H1 (cell line): ENCODE measurements at regions of chr14 and their contacts with region 1.

Region 1: DNA sequence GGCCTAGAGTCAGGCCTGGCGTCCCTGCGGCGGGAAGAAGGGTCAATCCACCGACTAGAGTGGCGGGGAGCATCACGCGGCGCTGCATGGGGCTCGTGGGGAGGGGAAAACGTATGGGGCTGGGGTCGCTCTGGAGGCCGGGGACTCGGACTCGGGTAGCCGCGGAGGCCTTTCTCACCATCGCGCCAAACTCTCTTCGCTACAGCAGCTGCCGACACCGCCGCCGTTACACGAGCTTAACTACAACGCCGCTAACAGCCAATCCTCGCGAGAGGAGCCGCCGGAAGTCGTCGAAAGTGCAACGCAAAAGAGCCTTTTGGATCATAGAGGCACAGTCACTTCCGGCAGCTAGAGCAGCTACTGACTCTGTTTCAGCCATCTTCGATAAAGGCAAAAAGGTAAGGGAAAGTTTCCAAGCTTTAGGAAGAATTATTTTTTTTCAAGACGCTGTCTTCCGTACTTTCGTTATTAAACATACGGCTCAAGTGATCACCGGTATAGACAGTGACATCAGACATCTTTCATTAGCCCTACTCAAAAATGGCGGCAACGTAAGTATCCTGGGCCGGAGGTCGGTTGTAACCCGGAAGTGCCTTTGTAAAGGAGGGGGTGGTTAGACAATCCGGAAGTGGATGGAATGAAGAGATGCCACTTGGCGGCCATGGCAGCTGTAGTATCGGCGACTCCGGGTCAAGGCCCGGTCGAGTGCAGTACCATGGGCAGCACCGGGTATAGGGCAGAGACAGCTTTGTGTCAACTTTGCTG is at the starts of genes ERH and SLC39A9:
- DNase-seq: peak; percentile 85 to 89
- H3K4me3 ChIP-seq: peak within 1 kb of the TSS; percentile 83 to 98 (median 92)
- H3K27ac ChIP-seq: peak within 1 kb of the TSS; percentile 93
- H3K4me1 ChIP-seq: peaks cover 0 to 2% (median under 1%) of the 10 kb centered on the region in 4 experiments; a peak in 2 of 7 replicates
- H3K27me3 ChIP-seq: no peaks in the 10 kb centered on the region
- CTCF ChIP-seq: no peak
- EP300 ChIP-seq: 0 out of 3 replicates have a peak, but pooled peaks of 1 of the 2 experiments have one; percentile 4
- POLR2A ChIP-seq: peak; percentile 81 to 98
- RAD21 ChIP-seq: no peak
- total RNA-seq, gene ERH: 447 and 454 TPM in 2 replicates
- total RNA-seq, gene SLC39A9: 43.8 and 44.2 TPM in 2 replicates

Region 2: DNA sequence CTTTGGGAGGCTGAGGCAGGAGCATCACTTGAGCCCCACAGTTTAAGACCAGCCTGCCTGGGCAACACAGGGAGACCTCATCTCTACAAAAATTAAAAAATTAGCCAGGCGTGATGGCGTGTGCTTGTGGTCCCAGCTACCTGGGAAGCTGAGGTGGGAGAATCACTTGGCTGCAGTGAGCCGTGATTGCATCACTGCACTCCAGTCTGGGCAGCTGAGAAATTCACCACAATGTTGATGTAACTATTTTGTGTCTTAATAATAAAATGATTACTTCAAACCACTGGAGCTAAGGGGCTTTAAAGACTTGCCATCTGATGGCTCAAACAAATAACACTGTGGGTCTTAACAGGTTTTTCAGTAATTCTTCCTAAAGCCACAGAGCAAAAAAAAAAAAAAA is 10.9 kb before region 1 on chr14:
- CTCF ChIA-PET with region 1: interaction called, 3 read pairs
- POLR2A ChIA-PET with region 1: interaction called, 131 read pairs
- DNase-seq: no peak
- H3K4me3 ChIP-seq: no peak overlapping the region
- H3K27ac ChIP-seq: no peak overlapping the region
- H3K4me1 ChIP-seq: 0 out of 7 replicates have a peak, but pooled peaks cover 0 to under 1% (median 0%) of the 10 kb centered on the region in 4 experiments
- H3K27me3 ChIP-seq: no peaks in the 10 kb centered on the region
- CTCF ChIP-seq: no peak
- EP300 ChIP-seq: no peak
- POLR2A ChIP-seq: no peak
- RAD21 ChIP-seq: no peak

Region 3: GRCh38 chr14:69408331-69408960 is 10.2 kb after region 1 on chr14:
- CTCF ChIA-PET with region 1: no interaction called
- POLR2A ChIA-PET with region 1: interaction called, 13 read pairs
- DNase-seq: no peak
- H3K4me3 ChIP-seq: no peak overlapping the region
- H3K27ac ChIP-seq: no peak overlapping the region
- H3K4me1 ChIP-seq: no peaks in the 10 kb centered on the region
- H3K27me3 ChIP-seq: no peaks in the 10 kb centered on the region
- CTCF ChIP-seq: no peak
- EP300 ChIP-seq: no peak
- POLR2A ChIP-seq: no peak
- RAD21 ChIP-seq: no peak

Region 4: DNA sequence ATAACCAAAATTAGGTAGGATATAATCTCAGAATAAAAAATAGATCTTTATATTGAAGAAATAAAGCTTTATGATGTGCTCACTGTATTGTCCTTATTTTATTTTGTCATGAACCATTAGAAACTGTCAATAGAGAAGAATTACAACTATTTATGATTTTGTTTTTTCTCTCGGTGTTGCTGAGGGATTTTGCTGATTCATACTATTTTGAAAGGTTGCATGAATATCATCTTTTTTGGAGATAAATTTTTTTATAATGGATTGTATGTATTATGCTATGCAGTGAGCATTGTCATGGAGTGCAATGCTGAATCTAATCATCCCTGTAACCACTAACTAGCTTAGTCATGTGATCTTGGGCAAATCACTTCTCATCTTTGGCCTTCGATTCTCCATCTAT is 15.2 kb after region 1 on chr14:
- CTCF ChIA-PET with region 1: no interaction called
- POLR2A ChIA-PET with region 1: interaction called, 13 read pairs
- DNase-seq: no peak
- H3K4me3 ChIP-seq: no peak overlapping the region
- H3K27ac ChIP-seq: no peak overlapping the region
- H3K4me1 ChIP-seq: no peaks in the 10 kb centered on the region
- H3K27me3 ChIP-seq: no peaks in the 10 kb centered on the region
- CTCF ChIP-seq: no peak
- EP300 ChIP-seq: no peak
- POLR2A ChIP-seq: no peak
- RAD21 ChIP-seq: no peak